Dendritic cell treated with granulocyte-macrophage colony-stimulating factor and Interleukin-4, amounts not matched to agents 40 ng/mL and 50 ng/mL, for 4 days (primary cell): ENCODE measurements at regions of chr3 and their contacts with region 1.

Region 1: DNA sequence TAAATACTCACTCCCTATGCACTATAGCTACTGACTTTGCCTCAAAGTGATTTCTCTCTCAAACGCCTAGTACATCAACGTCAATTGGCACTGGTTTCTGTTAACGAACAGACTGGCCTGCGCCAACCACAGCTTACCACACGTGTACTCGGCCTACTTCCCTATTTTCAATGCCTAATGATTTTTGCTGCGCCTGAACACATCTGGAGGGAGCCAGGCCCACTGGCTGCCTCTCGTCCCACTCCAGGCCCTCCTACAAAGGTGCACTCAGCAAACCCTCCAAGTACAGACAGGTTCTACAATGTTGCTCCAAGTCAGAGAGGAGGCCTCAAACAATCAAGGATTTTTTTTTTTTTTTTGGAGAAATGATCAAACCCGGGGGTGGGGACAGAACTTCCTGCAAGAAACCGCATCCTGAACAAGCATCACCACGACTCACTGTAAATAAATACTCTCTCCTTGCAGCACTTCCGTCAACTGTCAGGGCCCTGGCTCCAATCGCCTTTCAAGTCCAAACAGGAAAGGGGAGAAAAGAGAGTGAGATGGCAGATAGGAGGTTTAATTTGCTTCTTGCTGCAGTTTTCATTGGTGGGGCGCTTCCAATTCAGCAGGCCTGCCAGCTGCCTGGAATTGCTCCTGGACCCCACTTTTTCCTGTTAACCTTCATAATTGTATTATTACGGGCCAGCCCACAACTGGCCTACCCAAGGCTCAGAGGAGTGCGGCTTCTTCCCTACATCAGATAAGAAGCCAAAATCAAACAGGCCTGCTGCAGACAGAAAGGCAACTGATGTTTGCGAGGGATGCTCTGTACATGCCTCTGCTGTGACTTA is 139.3 kb downstream of the FOXP1 start:
- H3K4me3 Mint-ChIP-seq: peak overlapping the region; percentile 57
- H3K27ac Mint-ChIP-seq: peak overlapping the region; percentile 98
- H3K4me1 Mint-ChIP-seq: peaks cover 77% of the 10 kb centered on the region
- H3K27me3 Mint-ChIP-seq: no peaks in the 10 kb centered on the region

Region 2: DNA sequence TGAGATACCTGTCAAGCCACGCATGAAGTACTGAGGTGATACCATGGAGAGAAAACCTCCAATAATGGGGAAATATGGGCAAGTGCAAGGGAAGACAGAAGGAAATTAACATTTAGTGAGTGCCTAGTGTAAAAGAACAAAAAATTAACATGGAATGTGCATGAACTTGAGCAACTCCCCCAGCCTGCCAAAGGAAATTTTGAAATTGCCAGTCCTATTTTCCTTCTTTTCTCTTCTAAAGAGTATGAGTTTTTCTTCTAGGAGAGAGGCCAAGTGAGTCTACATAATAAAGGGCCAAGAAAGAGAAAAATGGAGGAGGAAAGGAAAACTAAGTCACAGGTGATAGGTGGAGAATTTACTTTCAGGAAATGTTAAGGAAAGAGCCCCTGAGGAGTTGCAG is 529.4 kb before region 1 on chr3:
- intact Hi-C with region 1: no loop called
- H3K4me3 Mint-ChIP-seq: no peak overlapping the region
- H3K27ac Mint-ChIP-seq: no peak overlapping the region
- H3K4me1 Mint-ChIP-seq: no peaks in the 10 kb centered on the region
- H3K27me3 Mint-ChIP-seq: no peaks in the 10 kb centered on the region

Region 3: GRCh38 chr3:71064288-71064955 is 379.8 kb before region 1 on chr3:
- intact Hi-C with region 1: loop called (anchors 10 kb)
- H3K4me3 Mint-ChIP-seq: no peak overlapping the region
- H3K27ac Mint-ChIP-seq: no peak overlapping the region
- H3K4me1 Mint-ChIP-seq: peaks cover 11% of the 10 kb centered on the region
- H3K27me3 Mint-ChIP-seq: peaks cover 2% of the 10 kb centered on the region

Region 4: GRCh38 chr3:71238355-71238757 is 205.9 kb before region 1 on chr3:
- intact Hi-C with region 1: no loop called
- H3K4me3 Mint-ChIP-seq: no peak overlapping the region
- H3K27ac Mint-ChIP-seq: no peak overlapping the region
- H3K4me1 Mint-ChIP-seq: no peaks in the 10 kb centered on the region
- H3K27me3 Mint-ChIP-seq: no peaks in the 10 kb centered on the region

Region 5: GRCh38 chr3:71389911-71390573 is 54.2 kb before region 1 on chr3:
- intact Hi-C with region 1: loop called (anchors 5 kb)
- H3K4me3 Mint-ChIP-seq: peak overlapping the region; percentile 50
- H3K27ac Mint-ChIP-seq: peak overlapping the region; percentile 86
- H3K4me1 Mint-ChIP-seq: peaks cover 48% of the 10 kb centered on the region
- H3K27me3 Mint-ChIP-seq: no peaks in the 10 kb centered on the region